ENCODE measurements at regions of chr4 and their contacts with region 1.

Region 1: GRCh38 chr4:87235020-87235671 is 14.7 kb upstream of the KLHL8 start:
- ATAC-seq: peak in 1 of 8 experiments; percentile 3
- H3K4me3 ChIP-seq: peak overlapping the region; percentile 22 to 44 (median 34)
- H3K27ac ChIP-seq: no peak overlapping the region
- H3K4me1 ChIP-seq: peaks cover 0 to 3% of the 10 kb centered on the region in 2 donors

Region 2: DNA sequence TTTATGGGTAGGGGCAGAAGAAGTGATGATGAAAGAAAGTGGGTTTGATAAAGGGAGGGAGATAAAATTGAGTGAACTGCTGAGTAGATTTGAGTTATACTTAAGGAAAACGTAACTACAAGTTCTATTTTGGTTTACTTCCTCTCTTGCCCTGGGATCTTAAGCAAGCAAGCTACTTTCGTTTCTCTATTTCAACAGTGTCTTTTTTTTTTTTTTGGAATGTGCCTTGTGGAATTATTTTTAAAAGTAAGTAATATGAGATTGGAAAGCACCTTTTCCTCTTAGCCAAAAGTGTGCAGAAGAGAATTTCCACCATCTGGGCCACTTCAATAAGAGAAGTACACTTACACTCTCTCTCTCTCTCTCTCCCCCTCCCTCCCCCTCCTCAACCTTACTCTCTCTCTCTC is 326.9 kb before region 1 on chr4:
- in situ Hi-C with region 1: loop called in 4 of 9 experiments (anchors 25 kb)
- ATAC-seq: no peak
- H3K4me3 ChIP-seq: no peak overlapping the region
- H3K27ac ChIP-seq: no peak overlapping the region
- H3K4me1 ChIP-seq: no peaks in the 10 kb centered on the region

Region 3: GRCh38 chr4:86934771-86935565 is 300.2 kb before region 1 on chr4 and contains the start of gene AFF1:
- in situ Hi-C with region 1: loop called in 2 of 9 experiments (anchors 25 kb)
- ATAC-seq: peak; percentile 70 to 91 (median 88)
- H3K4me3 ChIP-seq: peak within 1 kb of the TSS; percentile 47 to 78 (median 64)
- H3K27ac ChIP-seq: peak within 1 kb of the TSS; percentile 18 to 35
- H3K4me1 ChIP-seq: no peaks in the 10 kb centered on the region
- total RNA-seq, gene AFF1: 7.7 to 47.0 (median 15.8) TPM

Region 4: GRCh38 chr4:87144356-87144755 is 90.8 kb before region 1 on chr4:
- in situ Hi-C with region 1: loop called in 1 of 9 experiments (anchors 10 kb)
- ATAC-seq: no peak
- H3K4me3 ChIP-seq: no peak overlapping the region
- H3K27ac ChIP-seq: no peak overlapping the region
- H3K4me1 ChIP-seq: no peaks in the 10 kb centered on the region